Sigmoid colon (tissue), 7 donors: ENCODE measurements at regions of chr1 and their contacts with region 1.

Region 1: DNA sequence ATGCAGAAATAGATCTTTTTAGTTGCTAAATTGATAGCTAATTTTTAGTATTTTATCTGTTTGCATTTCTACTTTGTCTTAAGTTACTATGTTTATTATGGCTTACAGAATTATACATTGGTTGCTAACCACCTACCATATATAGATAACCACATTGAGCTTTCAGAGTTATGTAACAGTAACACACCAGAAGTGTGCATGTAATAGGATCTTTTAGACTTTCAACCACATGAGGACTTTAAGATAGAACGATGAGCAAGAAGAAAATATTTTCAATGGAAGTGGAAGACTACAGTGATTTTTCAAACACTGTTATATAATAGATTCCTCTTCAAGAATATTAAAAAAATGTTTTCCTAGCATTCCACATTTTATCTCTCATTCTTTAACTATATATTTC is 28.8 kb downstream of the TOR1AIP1 start:
- DNase-seq: no peak
- H3K4me3 ChIP-seq: no peak overlapping the region
- H3K27ac ChIP-seq: no peak overlapping the region
- H3K4me1 ChIP-seq: peaks cover 0 to 2% (median 0%) of the 10 kb centered on the region in 4 donors
- H3K27me3 ChIP-seq: no peaks in the 10 kb centered on the region
- CTCF ChIP-seq: no peak
- EP300 ChIP-seq: no peak
- POLR2A ChIP-seq: no peak

Region 2: GRCh38 chr1:180040034-180040433 is 129.1 kb after region 1 on chr1:
- intact Hi-C with region 1: loop called (anchors 10 kb)
- DNase-seq: no peak
- H3K4me3 ChIP-seq: no peak overlapping the region
- H3K27ac ChIP-seq: no peak overlapping the region
- H3K4me1 ChIP-seq: no peaks in the 10 kb centered on the region
- H3K27me3 ChIP-seq: no peaks in the 10 kb centered on the region
- CTCF ChIP-seq: no peak
- EP300 ChIP-seq: no peak
- POLR2A ChIP-seq: no peak